Thyroid gland (tissue), 4 donors: ENCODE measurements at regions of chr3 and their contacts with region 1.

Region 1: GRCh38 chr3:188962253-188963247 is 209.2 kb upstream of the TPRG1 start:
- DNase-seq: no peak
- H3K4me3 ChIP-seq: no peak overlapping the region
- H3K27ac ChIP-seq: no peak overlapping the region
- H3K4me1 ChIP-seq: peaks cover 0 to 16% of the 10 kb centered on the region in 2 donors
- H3K27me3 ChIP-seq: no peaks in the 10 kb centered on the region
- CTCF ChIP-seq: no peak
- POLR2A ChIP-seq: no peak

Region 2: DNA sequence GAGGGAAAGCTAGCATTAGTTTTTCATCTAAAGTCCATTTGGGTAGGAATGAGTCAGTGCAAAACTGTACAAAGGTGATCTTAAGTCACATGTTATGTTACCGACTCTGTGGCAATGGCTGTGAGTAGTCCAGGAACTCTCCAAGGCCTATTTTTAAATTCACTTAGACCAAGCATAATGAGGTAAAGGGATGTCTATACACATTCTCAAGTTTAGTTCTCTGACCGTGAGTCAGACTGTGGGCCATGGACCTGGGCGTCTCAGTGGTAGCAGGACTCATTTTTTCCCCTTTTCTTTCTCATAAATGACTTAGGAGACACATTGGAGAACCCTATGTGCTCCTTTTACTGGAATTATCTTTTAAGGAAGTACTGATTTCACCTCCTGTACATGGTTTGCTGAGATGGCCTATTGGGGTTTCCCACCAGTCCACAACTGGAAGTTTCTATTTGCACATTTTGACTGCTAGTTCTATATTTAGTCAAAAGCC is 279.5 kb before region 1 on chr3:
- intact Hi-C with region 1: no loop called
- DNase-seq: no peak
- H3K4me3 ChIP-seq: no peak overlapping the region
- H3K27ac ChIP-seq: no peak overlapping the region
- H3K4me1 ChIP-seq: peaks cover 0 to 16% of the 10 kb centered on the region in 2 donors
- H3K27me3 ChIP-seq: no peaks in the 10 kb centered on the region
- CTCF ChIP-seq: no peak
- POLR2A ChIP-seq: no peak

Region 3: DNA sequence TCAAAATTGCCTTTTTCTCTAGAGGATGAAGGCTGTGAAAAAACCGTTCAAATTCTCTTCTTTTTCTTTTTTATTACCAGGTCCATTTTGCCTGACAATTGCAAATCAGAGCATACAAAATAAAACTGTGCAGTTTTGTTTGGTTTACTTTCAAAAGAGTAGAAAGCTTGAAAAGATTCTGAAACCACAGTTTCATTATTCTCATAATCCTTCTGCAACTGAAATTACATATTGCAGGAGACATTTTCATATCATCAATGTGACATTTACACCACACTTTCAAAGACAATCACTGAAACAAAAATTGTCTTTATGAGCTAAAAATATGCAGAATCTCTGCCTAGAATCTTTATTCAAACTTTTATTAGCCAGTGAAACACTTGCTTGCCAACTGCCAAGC is 87.1 kb before region 1 on chr3:
- intact Hi-C with region 1: no loop called
- DNase-seq: no peak
- H3K4me3 ChIP-seq: no peak overlapping the region
- H3K27ac ChIP-seq: no peak overlapping the region
- H3K4me1 ChIP-seq: no peaks in the 10 kb centered on the region
- H3K27me3 ChIP-seq: no peaks in the 10 kb centered on the region
- CTCF ChIP-seq: no peak
- POLR2A ChIP-seq: no peak

Region 4: DNA sequence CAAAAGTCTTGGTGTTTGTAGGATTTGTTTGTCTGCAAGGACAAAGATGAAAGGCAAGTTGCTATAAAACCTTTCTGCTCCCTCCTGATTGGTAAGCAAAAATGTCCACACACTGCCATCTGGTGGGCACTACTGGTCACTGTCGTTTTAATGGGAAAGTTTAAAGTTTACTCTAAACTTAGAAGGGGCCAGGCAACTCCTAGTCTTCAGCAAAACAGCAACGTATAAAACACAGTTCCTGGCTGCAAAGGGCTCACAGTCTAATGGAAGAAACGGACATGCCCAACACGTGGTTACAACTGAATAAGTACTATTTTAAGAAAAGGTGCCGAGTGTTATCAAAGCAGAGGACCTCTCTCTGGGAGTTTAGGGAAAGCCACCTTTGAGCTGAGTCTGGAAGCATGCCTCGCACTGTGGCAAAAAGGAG is 185.5 kb after region 1 on chr3:
- intact Hi-C with region 1: loop called (anchors 10 kb)
- DNase-seq: peak; percentile 67 to 77
- H3K4me3 ChIP-seq: no peak overlapping the region
- H3K27ac ChIP-seq: peak overlapping the region in 2 of 3 donors; percentile 29 to 49
- H3K4me1 ChIP-seq: peaks cover 7 to 13% of the 10 kb centered on the region in 2 donors
- H3K27me3 ChIP-seq: no peaks in the 10 kb centered on the region
- CTCF ChIP-seq: peak; percentile 40 to 89 (median 81)
- POLR2A ChIP-seq: no peak